PC-9 (cell line): ENCODE measurements at regions of chr5 and their contacts with region 1.

Region 1: GRCh38 chr5:132829742-132830435 is 558 bp downstream of the SHROOM1 start:
- DNase-seq: peak; percentile 59 to 79
- H3K4me3 ChIP-seq: peak overlapping the region; percentile 83
- H3K27ac ChIP-seq: peak overlapping the region; percentile 42; the same call in 1 of the 2 replicates
- H3K4me1 ChIP-seq: peaks cover 14% of the 10 kb centered on the region; the same call in 1 of the 2 replicates
- H3K27me3 ChIP-seq: no peaks in the 10 kb centered on the region
- CTCF ChIP-seq: peak; percentile 82

Region 2: DNA sequence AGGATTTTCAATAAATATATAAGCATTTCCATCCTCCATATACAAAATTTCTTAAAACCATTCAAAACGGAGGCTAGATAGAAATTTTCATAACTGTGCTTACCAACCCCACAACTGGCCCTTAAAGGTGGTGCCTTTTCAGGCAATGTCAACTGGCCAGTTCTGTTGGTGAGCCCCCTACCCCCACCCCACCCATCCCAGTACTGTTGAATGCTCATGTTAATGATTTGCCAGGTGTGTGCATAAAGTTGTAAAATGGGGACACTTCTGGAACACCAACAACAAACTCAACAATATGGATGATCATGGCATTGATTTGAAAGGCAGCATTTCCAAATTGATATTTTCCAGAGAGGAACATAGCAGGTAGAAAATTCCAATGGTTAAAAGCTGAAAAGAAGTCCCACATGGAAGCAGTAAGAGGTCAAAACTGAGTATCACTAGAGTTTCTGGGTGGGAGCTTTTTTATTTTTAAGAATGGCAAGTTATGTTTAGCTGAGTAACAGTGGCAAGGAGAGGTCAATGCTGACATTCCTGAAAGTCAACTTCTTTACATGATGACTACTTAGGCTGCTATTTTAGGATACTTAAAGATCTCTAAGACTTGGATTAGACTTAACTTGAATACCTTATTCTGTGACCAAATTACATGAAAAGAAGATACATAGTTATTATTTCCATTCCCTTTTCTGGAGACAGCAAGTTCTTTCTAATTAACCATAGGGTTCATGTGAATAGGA is 46.3 kb after region 1 on chr5:
- CTCF ChIA-PET with region 1: no interaction called
- POLR2A ChIA-PET with region 1: interaction called, 10 read pairs
- intact Hi-C with region 1: no loop called
- DNase-seq: no peak
- H3K4me3 ChIP-seq: no peak overlapping the region
- H3K27ac ChIP-seq: no peak overlapping the region
- H3K4me1 ChIP-seq: no peaks in the 10 kb centered on the region
- H3K27me3 ChIP-seq: no peaks in the 10 kb centered on the region
- CTCF ChIP-seq: no peak

Region 3: GRCh38 chr5:132883261-132883834 is 53.5 kb after region 1 on chr5:
- CTCF ChIA-PET with region 1: interaction called, 4 read pairs
- POLR2A ChIA-PET with region 1: no interaction called
- intact Hi-C with region 1: loop called (anchors 1 kb)
- DNase-seq: peak; percentile 18 to 61
- H3K4me3 ChIP-seq: no peak overlapping the region
- H3K27ac ChIP-seq: no peak overlapping the region; the same call in 1 of the 2 replicates
- H3K4me1 ChIP-seq: no peaks in the 10 kb centered on the region
- H3K27me3 ChIP-seq: no peaks in the 10 kb centered on the region
- CTCF ChIP-seq: peak; percentile 77